ENCODE measurements at regions of chr20 and their contacts with region 1.

Region 1: DNA sequence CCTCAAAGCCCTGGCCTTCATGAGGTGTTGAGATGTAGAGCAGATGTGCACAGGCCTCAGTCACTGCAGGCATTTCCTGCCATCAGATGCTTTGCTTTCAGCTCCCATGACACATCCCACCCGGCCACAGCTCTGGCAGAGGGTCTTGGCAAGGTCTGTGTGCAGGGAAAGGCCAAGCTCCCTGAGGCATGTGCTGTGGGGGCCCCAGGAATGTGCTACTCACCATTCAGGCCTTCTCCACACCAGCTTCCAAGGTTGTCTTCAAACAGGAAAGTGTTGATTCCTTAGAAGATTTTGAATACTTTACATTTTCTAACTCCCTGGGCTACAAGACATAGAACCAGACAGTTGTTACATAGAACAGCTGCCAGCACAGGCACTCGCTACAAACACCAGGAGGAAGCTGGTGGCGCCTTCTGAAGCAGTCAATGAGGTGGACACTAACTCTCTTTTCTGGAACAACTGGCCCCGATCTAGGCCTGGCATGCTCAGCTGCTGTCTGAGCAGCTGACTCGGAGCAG is 27.8 kb downstream of the CASS4 start:
- DNase-seq: peak; percentile 38
- H3K4me3 Mint-ChIP-seq: no peak overlapping the region
- H3K27ac Mint-ChIP-seq: peak overlapping the region; percentile 77
- H3K4me1 Mint-ChIP-seq: peaks cover 40% of the 10 kb centered on the region
- H3K27me3 Mint-ChIP-seq: no peaks in the 10 kb centered on the region

Region 2: DNA sequence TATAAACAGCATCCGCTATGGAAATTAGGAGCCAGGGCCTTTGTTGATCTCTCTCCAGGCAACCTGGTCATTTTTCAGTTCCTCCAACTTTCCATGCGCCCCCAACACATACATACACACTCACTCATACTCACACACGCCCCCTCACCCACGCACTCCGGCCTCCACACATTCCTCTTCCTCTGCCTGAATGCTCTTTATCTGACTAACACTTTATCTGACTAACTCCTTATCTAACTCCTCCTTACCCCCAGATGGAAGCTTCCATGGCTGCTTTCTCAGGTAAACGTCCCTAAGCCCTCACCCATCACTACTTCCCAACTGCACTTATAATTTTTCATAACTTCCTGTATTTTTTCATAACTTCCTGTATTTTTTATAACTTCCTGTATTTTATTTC is 10.3 kb before region 1 on chr20:
- CTCF ChIA-PET with region 1: no interaction called
- intact Hi-C with region 1: loop called (anchors 1 kb)
- DNase-seq: peak; percentile 65
- H3K4me3 Mint-ChIP-seq: peak overlapping the region; percentile 72
- H3K27ac Mint-ChIP-seq: peak overlapping the region; percentile 90
- H3K4me1 Mint-ChIP-seq: peaks cover 65% of the 10 kb centered on the region
- H3K27me3 Mint-ChIP-seq: no peaks in the 10 kb centered on the region

Region 3: GRCh38 chr20:56454754-56455153 is 14.9 kb after region 1 on chr20:
- CTCF ChIA-PET with region 1: no interaction called
- intact Hi-C with region 1: loop called (anchors 1 kb)
- DNase-seq: peak; percentile 26
- H3K4me3 Mint-ChIP-seq: no peak overlapping the region
- H3K27ac Mint-ChIP-seq: peak overlapping the region; percentile 68
- H3K4me1 Mint-ChIP-seq: peaks cover 21% of the 10 kb centered on the region
- H3K27me3 Mint-ChIP-seq: no peaks in the 10 kb centered on the region

Region 4: DNA sequence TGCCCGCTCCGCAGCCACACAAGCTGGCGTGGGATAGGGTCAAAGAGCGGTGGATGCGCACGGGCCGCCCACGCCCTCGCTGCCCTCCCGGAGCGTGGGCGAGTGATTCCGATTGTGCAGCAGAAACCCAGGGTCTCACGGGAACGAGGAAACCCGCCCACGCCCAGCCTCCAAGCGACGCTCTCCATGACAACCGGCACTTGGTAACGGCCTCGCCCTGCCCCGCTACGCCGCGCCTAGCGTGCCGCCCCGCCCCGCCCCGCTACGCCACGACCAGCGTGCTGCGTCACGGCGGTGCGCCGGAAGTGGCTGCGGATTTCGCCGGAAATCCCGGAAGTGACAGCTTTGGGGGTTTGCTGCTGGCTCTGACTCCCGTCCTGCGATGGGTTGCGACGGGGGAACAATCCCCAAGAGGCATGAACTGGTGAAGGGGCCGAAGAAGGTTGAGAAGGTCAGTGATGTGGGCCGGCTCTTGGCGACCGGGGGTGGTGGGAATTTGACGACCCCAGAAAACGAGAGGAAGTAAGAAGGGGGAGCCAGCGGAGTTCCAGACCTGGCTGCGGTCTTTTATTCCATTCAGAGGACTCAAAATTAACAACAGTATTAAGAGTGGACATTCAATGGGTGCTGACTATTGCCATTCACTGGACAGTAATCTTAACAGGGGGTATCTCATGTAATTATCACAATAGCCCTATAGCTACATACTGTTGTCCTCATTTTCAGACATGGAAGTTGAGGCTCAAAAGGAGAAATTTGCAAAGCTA is 28.7 kb after region 1 on chr20 and contains the start of gene RTF2:
- CTCF ChIA-PET with region 1: no interaction called
- intact Hi-C with region 1: loop called (anchors 1 kb)
- DNase-seq: peak; percentile 95
- H3K4me3 Mint-ChIP-seq: peak within 1 kb of the TSS; percentile 100
- H3K27ac Mint-ChIP-seq: peak within 1 kb of the TSS; percentile 98
- H3K4me1 Mint-ChIP-seq: peaks cover 29% of the 10 kb centered on the region
- H3K27me3 Mint-ChIP-seq: no peaks in the 10 kb centered on the region
- total RNA-seq, gene RTF2: 76.8 to 82.9 TPM

Region 5: DNA sequence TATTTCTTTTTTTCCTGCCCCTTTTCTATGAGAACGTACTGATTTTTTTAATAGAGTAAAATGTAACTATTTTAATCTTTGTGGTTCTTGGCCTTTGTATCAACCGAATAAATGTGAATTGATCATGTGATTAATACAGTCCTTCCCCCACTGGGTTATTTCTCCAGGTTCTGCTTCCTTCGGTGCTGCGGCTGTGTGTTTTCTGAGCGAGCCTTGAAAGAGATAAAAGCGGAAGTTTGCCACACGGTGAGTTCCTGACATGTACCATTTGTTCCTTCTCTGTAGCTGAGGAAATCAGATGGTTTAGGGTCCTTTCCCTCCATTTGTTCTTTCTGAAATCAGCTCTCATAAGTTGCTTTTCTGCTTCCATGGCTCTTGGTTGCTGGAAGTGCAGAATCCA is 44.1 kb after region 1 on chr20:
- CTCF ChIA-PET with region 1: no interaction called
- intact Hi-C with region 1: no loop called
- DNase-seq: peak; percentile 27
- H3K4me3 Mint-ChIP-seq: peak overlapping the region; percentile 19
- H3K27ac Mint-ChIP-seq: peak overlapping the region; percentile 80
- H3K4me1 Mint-ChIP-seq: peaks cover 27% of the 10 kb centered on the region
- H3K27me3 Mint-ChIP-seq: no peaks in the 10 kb centered on the region

Measured in activated naive CD4-positive, alpha-beta T cell treated with anti-CD3 and anti-CD28 coated beads for 36 hours (primary cell).